ENCODE measurements at regions of chr20 and their contacts with region 1.

Region 1: GRCh38 chr20:53077373-53078205 is 105.4 kb downstream of the TSHZ2 start:
- DNase-seq: no peak
- H3K4me3 Mint-ChIP-seq: no peak overlapping the region
- H3K27ac Mint-ChIP-seq: no peak overlapping the region
- H3K4me1 Mint-ChIP-seq: peaks cover 19% of the 10 kb centered on the region
- H3K27me3 Mint-ChIP-seq: no peaks in the 10 kb centered on the region

Region 2: GRCh38 chr20:52047811-52048764 is 1029.5 kb before region 1 on chr20:
- intact Hi-C with region 1: loop called (anchors 10 kb)
- DNase-seq: peak; percentile 38
- H3K4me3 Mint-ChIP-seq: peak overlapping the region; percentile 48
- H3K27ac Mint-ChIP-seq: peak overlapping the region; percentile 84
- H3K4me1 Mint-ChIP-seq: peaks cover 34% of the 10 kb centered on the region
- H3K27me3 Mint-ChIP-seq: peaks cover 1% of the 10 kb centered on the region

Region 3: DNA sequence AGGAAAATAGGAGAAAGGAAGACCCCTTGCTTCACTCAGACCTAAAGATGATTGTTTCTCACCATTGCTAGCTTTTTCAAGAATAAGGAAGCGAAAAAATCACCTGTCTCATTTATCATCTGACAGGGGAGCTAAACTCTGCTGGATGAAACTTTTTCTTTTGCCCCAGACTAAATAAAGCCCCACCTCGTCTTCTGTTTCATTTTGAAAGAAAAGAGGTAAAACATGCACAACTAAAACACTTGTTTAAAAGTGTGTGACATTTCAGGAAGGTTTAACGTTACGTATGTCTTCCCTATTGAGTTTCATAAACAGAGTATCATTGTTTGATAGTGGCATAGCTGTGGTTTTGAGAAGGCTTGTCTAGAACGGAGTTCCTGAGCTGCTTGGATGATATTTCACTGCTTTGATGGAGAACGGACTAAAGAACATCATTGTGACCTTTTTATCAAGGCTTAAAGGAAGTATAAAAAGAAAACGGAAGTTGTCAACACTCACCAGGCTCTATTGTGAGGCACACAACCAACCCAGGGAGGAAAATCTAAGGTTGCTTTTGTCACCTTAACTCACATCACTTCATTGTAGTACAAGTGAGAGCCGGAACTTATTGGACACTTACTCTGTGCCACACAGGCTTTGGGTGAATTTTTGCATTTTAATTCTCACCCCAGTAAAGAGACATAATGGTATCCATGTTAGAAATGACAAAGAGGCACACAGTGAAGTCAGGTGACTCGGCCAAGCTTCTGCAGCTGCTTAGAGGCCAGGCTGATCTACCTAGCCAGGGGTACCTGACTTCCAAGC is 75.9 kb before region 1 on chr20:
- intact Hi-C with region 1: loop called (anchors 2 kb)
- DNase-seq: no peak
- H3K4me3 Mint-ChIP-seq: peak overlapping the region; percentile 79
- H3K27ac Mint-ChIP-seq: peak overlapping the region; percentile 98
- H3K4me1 Mint-ChIP-seq: peaks cover 59% of the 10 kb centered on the region
- H3K27me3 Mint-ChIP-seq: no peaks in the 10 kb centered on the region

Region 4: GRCh38 chr20:53149148-53149889 is 71.7 kb after region 1 on chr20:
- intact Hi-C with region 1: loop called (anchors 1 kb)
- DNase-seq: no peak
- H3K4me3 Mint-ChIP-seq: peak overlapping the region; percentile 45
- H3K27ac Mint-ChIP-seq: peak overlapping the region; percentile 75
- H3K4me1 Mint-ChIP-seq: peaks cover 64% of the 10 kb centered on the region
- H3K27me3 Mint-ChIP-seq: no peaks in the 10 kb centered on the region

Region 5: GRCh38 chr20:53652090-53652858 is 574.7 kb after region 1 on chr20:
- intact Hi-C with region 1: loop called (anchors 10 kb)
- DNase-seq: no peak
- H3K4me3 Mint-ChIP-seq: peak overlapping the region; percentile 70
- H3K27ac Mint-ChIP-seq: peak overlapping the region; percentile 97
- H3K4me1 Mint-ChIP-seq: peaks cover 41% of the 10 kb centered on the region
- H3K27me3 Mint-ChIP-seq: no peaks in the 10 kb centered on the region

Measured in activated T-helper 1 cell treated with anti-CD3 and anti-CD28 coated beads, Interleukin-12 subunit alpha, Interleukin-12 subunit beta, Interleukin-2, Interleukin-4 antibody, amounts not matched to agents 30 ng/mL and 10 ng/mL and 1 ng/mL, durations not matched to agents 14 hours and 24 hours and 36 hours (primary cell).